K562 (cell line): ENCODE measurements at regions of chr11 and their contacts with region 1.

Region 1: GRCh38 chr11:114166897-114167323 is 107.4 kb downstream of the ZBTB16 start:
- DNase-seq: no peak
- ATAC-seq: no peak
- H3K4me3 ChIP-seq: no peak overlapping the region
- H3K27ac ChIP-seq: no peak overlapping the region
- H3K4me1 ChIP-seq: peaks cover 0 to 8% of the 10 kb centered on the region in 2 experiments; a peak in 2 of 5 replicates
- H3K27me3 ChIP-seq: peaks cover 4 to 37% of the 10 kb centered on the region in 2 experiments; a peak in 4 of 5 replicates
- CTCF ChIP-seq: no peak
- EP300 ChIP-seq: no peak
- POLR2A ChIP-seq: no peak
- RAD21 ChIP-seq: no peak

Region 2: DNA sequence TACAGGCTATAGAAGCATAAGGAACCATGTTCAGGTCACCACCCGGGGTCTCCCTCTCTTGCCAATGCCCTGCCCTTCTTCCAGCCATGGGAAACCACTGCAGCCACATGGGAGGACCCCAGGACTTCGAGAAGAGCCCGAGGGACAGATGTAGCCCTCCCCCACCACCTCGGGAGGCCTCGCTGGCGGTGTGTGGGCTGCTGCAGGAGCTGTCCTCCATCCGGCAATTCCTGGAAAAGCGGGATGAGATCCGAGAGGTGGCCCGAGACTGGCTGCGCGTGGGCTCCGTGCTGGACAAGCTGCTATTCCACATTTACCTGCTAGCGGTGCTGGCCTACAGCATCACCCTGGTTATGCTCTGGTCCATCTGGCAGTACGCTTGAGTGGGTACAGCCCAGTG is 177.5 kb before region 1 on chr11:
- CTCF ChIA-PET with region 1: no interaction called
- POLR2A ChIA-PET with region 1: no interaction called
- in situ Hi-C with region 1: no loop called
- intact Hi-C with region 1: no loop called
- DNase-seq: no peak
- ATAC-seq: no peak
- H3K4me3 ChIP-seq: no peak overlapping the region
- H3K27ac ChIP-seq: no peak overlapping the region
- H3K4me1 ChIP-seq: no peaks in the 10 kb centered on the region
- H3K27me3 ChIP-seq: peaks cover 5 to 21% of the 10 kb centered on the region in 2 experiments
- CTCF ChIP-seq: no peak
- EP300 ChIP-seq: no peak
- POLR2A ChIP-seq: no peak
- RAD21 ChIP-seq: no peak

Region 3: GRCh38 chr11:114080219-114080618 is 86.7 kb before region 1 on chr11:
- CTCF ChIA-PET with region 1: no interaction called
- POLR2A ChIA-PET with region 1: no interaction called
- in situ Hi-C with region 1: no loop called
- intact Hi-C with region 1: loop called (anchors 5 kb)
- DNase-seq: no peak
- ATAC-seq: no peak
- H3K4me3 ChIP-seq: no peak overlapping the region
- H3K27ac ChIP-seq: no peak overlapping the region
- H3K4me1 ChIP-seq: peaks cover 9 to 28% of the 10 kb centered on the region in 2 experiments; a peak in 4 of 5 replicates
- H3K27me3 ChIP-seq: peaks cover 17 to 38% of the 10 kb centered on the region in 2 experiments
- CTCF ChIP-seq: no peak
- EP300 ChIP-seq: no peak
- POLR2A ChIP-seq: no peak
- RAD21 ChIP-seq: no peak

Region 4: DNA sequence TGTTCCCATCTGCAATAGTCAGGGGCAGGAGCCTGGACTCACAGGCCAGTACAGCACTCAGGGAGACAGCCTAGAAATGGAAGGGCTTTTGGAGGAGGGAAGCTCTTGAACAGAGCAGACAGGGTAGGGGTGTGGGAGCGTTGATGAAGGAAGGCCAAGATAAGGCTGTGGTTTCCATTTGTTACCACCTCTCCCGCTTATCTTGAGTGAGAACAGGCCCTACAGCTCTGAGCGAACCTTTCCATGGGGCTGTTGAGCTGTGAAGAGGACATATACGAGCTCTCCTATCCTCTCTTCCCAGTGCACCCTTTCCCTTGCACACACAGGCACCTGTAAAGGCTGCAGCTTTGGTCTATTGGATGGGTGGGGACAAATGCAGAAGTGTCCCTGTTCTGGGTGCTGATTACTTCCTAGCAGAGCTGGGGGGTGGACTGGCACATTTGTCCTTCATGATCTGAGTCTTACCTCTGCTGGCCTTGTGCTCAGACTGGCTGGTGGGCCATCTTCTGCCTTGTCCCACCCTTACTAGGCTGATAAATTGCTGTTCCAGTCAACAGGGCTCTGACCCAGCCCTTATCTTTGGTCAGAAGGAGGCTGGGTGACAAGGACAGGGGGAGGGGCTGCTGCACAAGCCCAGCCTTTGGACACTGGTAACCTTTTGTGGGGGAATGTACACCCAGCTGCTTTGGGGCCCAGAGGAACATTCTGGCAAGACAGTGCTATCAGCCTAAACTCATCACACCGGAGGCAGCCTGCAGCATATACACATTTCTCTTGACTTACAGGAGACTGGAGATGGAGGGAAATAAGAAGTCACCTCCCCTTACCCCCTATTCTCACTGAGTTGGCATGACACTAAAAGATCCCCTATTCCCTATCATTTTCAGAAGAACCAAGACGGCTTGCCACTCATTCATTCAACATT is 49.2 kb after region 1 on chr11:
- CTCF ChIA-PET with region 1: no interaction called
- POLR2A ChIA-PET with region 1: no interaction called
- in situ Hi-C with region 1: no loop called
- intact Hi-C with region 1: no loop called
- DNase-seq: peak; percentile 83 to 97 (median 89)
- ATAC-seq: peak; percentile 91
- H3K4me3 ChIP-seq: peak overlapping the region; percentile 7; the same call in 1 of the 2 replicates
- H3K27ac ChIP-seq: peak overlapping the region; percentile 95
- H3K4me1 ChIP-seq: peaks cover 40 to 78% of the 10 kb centered on the region in 2 experiments
- H3K27me3 ChIP-seq: no peaks in the 10 kb centered on the region
- CTCF ChIP-seq: 0 out of 6 replicates have a peak, but pooled peaks of 1 of the 3 experiments have one; percentile 5
- EP300 ChIP-seq: peak; percentile 96
- POLR2A ChIP-seq: peak; percentile 56; the same call in 1 of the 2 replicates
- RAD21 ChIP-seq: peak in 1 of 2 experiments; percentile 33; a peak in 2 of 4 replicates

Region 5: DNA sequence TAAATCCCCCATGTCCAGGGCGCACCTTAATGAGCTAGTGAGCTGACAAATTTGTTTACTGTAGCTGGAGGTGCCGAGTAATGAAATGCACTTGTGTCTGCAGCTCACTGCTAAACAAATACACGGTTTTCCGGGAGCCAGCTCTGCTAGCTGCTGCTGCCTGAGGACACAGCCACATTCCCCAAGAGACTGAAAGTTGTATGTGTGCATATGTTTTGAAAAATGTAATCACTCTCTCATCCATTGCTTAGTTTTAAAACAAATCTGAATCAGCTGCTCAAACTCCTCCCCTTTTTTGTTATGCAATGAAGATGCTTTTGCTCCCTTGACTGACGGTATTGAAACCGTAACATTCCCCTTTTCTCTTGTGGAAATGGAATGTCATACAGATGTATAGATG is 66.8 kb after region 1 on chr11:
- CTCF ChIA-PET with region 1: no interaction called
- POLR2A ChIA-PET with region 1: no interaction called
- in situ Hi-C with region 1: no loop called
- intact Hi-C with region 1: no loop called
- DNase-seq: no peak
- ATAC-seq: no peak
- H3K4me3 ChIP-seq: no peak overlapping the region
- H3K27ac ChIP-seq: no peak overlapping the region
- H3K4me1 ChIP-seq: peaks cover 10 to 16% of the 10 kb centered on the region in 2 experiments
- H3K27me3 ChIP-seq: no peaks in the 10 kb centered on the region
- CTCF ChIP-seq: no peak
- EP300 ChIP-seq: no peak
- POLR2A ChIP-seq: no peak
- RAD21 ChIP-seq: no peak